ENCODE measurements at regions of chr5 and their contacts with region 1.

Region 1: DNA sequence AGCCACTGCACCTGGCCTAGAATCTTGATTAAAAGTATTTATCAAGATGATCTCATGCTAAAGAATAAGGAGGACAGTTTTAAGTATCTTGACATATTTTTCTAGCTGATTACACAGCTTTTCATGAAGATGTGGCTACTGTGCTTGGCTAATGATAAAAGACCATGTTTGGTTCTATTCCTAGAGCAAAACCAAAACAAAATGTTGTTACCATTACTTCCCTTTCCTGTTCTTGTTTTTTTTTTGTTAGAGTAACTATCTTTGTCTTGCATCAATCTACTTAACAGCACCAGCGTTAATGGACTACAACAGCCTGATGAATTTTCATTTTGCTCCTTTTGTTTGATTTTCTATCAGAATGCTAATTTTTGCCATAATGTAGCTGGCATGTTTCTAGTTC is 86.2 kb upstream of the DHFR start:
- DNase-seq: no peak
- H3K27ac ChIP-seq: no peak overlapping the region
- CTCF ChIP-seq: no peak

Region 2: GRCh38 chr5:80725446-80725845 is 15.6 kb before region 1 on chr5:
- CTCF ChIA-PET with region 1: interaction called, 10 read pairs
- POLR2A ChIA-PET with region 1: no interaction called
- DNase-seq: no peak
- H3K27ac ChIP-seq: no peak overlapping the region
- CTCF ChIP-seq: no peak

Region 3: DNA sequence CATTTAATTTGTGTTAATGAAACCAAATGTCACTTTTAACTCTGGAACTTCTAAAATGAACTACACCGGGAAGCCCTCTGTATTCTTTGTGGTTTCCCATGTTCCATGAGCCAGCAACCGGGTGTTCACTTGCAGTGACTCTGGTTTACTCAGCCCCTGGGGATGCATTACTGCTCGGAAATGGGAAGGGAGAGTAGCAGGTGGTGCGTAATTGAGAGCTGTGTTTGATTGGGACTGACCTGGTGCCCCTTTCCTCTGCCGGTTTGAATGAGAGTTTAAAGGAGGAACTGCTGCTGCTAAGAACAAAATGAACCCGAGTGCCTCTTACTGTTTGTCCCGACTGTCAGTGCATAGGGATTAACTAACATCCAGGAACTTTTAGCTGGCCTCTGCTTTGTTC is 13.9 kb after region 1 on chr5:
- CTCF ChIA-PET with region 1: no interaction called
- POLR2A ChIA-PET with region 1: no interaction called
- DNase-seq: no peak
- H3K27ac ChIP-seq: no peak overlapping the region
- CTCF ChIP-seq: no peak

Measured in RWPE1 (cell line).